ENCODE measurements at regions of chr11 and their contacts with region 1.

Region 1: GRCh38 chr11:47869546-47870393 is 21.6 kb upstream of the NUP160 start:
- DNase-seq: no peak
- ATAC-seq: no peak
- H3K4me3 Mint-ChIP-seq: no peak overlapping the region
- H3K27ac Mint-ChIP-seq: no peak overlapping the region
- H3K4me1 Mint-ChIP-seq: peaks cover 5% of the 10 kb centered on the region
- H3K27me3 Mint-ChIP-seq: no peaks in the 10 kb centered on the region
- CTCF ChIP-seq: no peak

Region 2: GRCh38 chr11:47854667-47855066 is 15.1 kb before region 1 on chr11:
- CTCF ChIA-PET with region 1: interaction called, 21 read pairs
- POLR2A ChIA-PET with region 1: no interaction called
- intact Hi-C with region 1: no loop called
- DNase-seq: no peak
- ATAC-seq: no peak
- H3K4me3 Mint-ChIP-seq: no peak overlapping the region
- H3K27ac Mint-ChIP-seq: no peak overlapping the region
- H3K4me1 Mint-ChIP-seq: peaks cover 11% of the 10 kb centered on the region
- H3K27me3 Mint-ChIP-seq: no peaks in the 10 kb centered on the region
- CTCF ChIP-seq: no peak

Measured in activated CD8-positive, alpha-beta T cell treated with anti-CD3 and anti-CD28 coated beads for 36 hours (primary cell).